Mammary epithelial cell (primary cell): ENCODE measurements at regions of chr11 and their contacts with region 1.

Region 1: GRCh38 chr11:101127699-101128570 is 1.7 kb downstream of the PGR start:
- DNase-seq: no peak
- H3K4me3 ChIP-seq: peak overlapping the region in 2 of 3 experiments; percentile 10 to 11
- H3K27ac ChIP-seq: no peak overlapping the region
- H3K4me1 ChIP-seq: peaks cover 17% of the 10 kb centered on the region
- H3K27me3 ChIP-seq: peaks cover 55% of the 10 kb centered on the region
- CTCF ChIP-seq: no peak

Region 2: DNA sequence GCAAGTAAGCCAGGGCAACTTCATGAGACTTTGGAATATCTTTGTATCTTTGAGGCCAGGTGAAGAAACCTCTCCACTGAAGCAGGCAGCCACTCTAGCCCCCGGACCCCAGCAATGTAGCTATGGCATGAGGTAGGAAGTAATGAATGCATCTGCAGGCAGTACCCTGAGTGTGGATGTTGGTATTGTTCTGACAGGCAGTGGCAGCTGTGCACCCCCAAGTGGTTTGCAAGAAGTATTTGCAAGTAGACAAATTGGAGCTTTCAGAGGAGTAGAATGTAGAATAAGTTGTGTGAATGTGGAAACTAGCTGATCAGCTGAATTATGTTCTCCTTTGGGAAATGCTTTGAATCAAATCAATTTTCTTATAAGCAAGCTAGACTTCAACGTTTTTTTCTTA is 196.1 kb after region 1 on chr11:
- CTCF ChIA-PET with region 1: no interaction called
- dilution Hi-C with region 1: no loop called
- in situ Hi-C with region 1: no loop called
- intact Hi-C with region 1: loop called (anchors 5 kb)
- DNase-seq: peak; percentile 5
- H3K4me3 ChIP-seq: no peak overlapping the region
- H3K27ac ChIP-seq: no peak overlapping the region
- H3K4me1 ChIP-seq: no peaks in the 10 kb centered on the region
- H3K27me3 ChIP-seq: no peaks in the 10 kb centered on the region
- CTCF ChIP-seq: peak in 1 of 2 donors; percentile 24

Region 3: GRCh38 chr11:101523634-101524260 is 395.8 kb after region 1 on chr11:
- CTCF ChIA-PET with region 1: no interaction called
- dilution Hi-C with region 1: no loop called
- in situ Hi-C with region 1: no loop called
- intact Hi-C with region 1: no loop called
- DNase-seq: peak; percentile 7
- H3K4me3 ChIP-seq: no peak overlapping the region
- H3K27ac ChIP-seq: no peak overlapping the region
- H3K4me1 ChIP-seq: no peaks in the 10 kb centered on the region
- H3K27me3 ChIP-seq: no peaks in the 10 kb centered on the region
- CTCF ChIP-seq: no peak